Right ventricle myocardium inferior (tissue), 1 donor: ENCODE measurements at regions of chr10 and their contacts with region 1.

Region 1: DNA sequence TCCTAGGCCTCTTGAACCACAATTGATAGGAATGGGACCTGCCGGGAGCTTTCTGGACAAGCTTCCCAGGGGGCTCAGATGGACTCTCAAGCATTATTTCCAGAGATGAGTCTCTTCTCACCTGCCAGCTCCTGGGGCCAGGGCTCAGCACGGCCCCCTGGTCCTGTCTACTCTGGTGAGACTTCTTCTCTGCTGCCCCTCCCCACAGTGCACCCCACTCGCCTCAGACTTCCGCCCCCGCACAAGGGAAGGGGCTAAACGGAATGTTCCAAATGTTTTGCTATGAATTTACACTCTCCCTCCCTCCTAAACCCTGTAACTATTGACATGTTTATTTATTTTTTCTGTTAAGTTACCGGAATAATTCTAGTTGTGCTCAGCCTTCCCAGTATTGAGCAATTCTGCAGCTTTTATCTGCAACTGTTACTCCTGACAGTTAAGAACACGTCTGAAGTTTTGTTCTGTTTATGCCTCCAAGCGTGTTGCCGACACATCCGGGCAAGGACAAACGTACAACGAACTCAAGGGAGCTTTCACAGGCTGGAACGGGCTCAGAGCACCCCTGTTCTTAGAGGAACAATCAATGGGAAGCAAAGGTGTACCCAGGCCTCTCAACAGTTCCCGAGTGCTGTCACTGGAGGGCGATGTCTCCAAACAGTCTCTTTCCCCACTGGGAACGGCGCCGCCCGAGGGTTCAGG is 55.2 kb downstream of the FHIP2A start:
- DNase-seq: peak; percentile 81
- ATAC-seq: peak; percentile 69

Region 2: DNA sequence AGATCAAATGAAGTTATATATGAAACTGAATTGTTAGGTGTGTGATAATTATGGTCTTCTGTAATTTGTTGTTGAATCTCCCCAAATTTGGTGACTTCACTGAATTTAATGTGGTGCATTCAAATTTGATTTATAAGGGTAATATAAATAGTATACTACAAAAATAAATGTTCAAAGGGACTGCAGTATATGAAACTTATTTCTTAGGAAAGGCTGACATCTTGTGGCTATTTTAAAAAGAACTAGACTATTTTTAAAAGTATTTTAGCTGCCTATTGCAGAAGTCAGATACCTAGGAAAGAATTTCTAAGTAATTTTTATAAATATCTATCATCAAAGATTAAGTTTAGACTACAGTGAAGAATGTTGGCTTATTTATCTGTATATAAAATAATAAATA is 253.0 kb after region 1 on chr10:
- intact Hi-C with region 1: loop called (anchors 1 kb)
- DNase-seq: no peak
- ATAC-seq: no peak